ENCODE measurements at regions of chr16 and their contacts with region 1.

Region 1: DNA sequence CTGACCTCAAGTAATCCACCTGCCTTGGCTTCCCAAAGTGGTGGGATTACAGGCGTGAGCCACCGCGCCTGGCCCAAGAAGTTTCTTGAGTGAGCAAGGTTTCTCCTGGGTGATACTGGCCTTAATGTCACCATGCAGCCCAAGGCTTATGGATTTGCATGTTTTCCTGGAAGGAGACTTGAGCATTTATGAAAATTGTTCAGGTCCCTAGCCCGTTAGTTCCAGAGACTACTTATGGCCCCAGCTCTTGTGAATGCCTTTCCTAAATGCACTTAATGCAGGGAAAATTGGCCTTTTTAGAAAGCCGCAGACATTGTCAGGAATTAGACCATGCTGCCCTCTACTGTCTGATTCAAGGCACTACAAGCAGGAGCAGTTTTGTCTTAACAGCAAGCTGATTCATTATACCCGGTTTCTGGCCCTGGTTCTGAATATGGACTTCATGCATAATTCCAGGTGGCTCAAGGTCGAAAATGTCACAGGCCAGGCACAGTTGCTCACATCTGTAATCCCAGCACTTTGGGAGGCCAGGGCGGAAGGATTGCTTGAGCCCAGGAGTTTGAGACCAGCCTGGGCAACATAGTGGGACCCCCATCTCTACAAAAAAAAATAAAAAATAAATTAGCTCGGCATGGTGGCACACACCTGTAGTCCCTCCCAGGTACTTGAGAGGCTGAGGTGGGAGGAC is 91.3 kb downstream of the SNX29 start:
- DNase-seq: peak; percentile 41
- ATAC-seq: peak; percentile 66
- H3K4me3 Mint-ChIP-seq: no peak overlapping the region
- H3K27ac Mint-ChIP-seq: no peak overlapping the region
- H3K4me1 Mint-ChIP-seq: no peaks in the 10 kb centered on the region
- H3K27me3 Mint-ChIP-seq: no peaks in the 10 kb centered on the region
- CTCF ChIP-seq: peak; percentile 91

Region 2: DNA sequence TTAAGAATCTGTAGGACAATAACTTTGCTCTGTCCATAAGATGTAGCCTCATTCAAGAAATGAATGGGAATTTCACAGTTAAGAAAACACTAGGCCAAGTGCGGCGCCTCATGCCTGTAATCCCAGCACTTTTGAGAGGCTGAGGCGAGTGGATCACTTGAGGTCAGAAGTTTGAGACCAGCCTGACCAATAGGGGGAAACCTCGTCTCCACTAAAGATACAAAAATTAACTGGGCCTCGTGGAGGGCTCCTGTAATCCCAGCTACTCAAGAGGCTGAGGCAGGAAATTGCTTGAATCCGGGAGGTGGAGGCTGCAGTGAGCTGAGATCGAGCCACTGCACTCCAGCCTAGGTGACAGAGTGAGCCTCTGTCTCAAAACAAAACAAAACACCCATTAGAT is 196.7 kb before region 1 on chr16:
- CTCF ChIA-PET with region 1: interaction called, 16 read pairs
- POLR2A ChIA-PET with region 1: no interaction called
- DNase-seq: peak; percentile 28
- ATAC-seq: peak; percentile 89
- H3K4me3 Mint-ChIP-seq: no peak overlapping the region
- H3K27ac Mint-ChIP-seq: peak overlapping the region; percentile 87
- H3K4me1 Mint-ChIP-seq: peaks cover 4% of the 10 kb centered on the region
- H3K27me3 Mint-ChIP-seq: no peaks in the 10 kb centered on the region; the same call in 1 of the 2 replicates
- CTCF ChIP-seq: no peak

Region 3: DNA sequence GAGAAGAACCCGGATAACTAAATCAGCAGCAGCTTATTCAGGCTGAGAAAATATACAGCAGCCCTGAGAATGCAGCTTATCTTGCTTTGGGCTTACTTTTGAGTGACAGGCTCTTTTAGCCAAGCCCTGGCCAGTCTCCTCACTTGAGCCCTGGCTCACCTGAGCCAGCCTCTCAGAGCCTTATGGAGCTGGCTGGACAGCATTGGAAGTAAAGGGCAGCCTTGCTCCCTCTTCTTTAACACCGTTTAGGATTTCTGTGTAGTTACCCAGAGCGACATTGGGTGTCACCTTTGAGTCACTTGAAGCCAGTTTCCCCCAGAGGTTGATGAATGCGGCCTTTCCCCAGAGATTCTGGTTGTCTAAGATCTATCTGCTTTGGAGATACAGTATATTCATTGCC is 118.3 kb before region 1 on chr16:
- CTCF ChIA-PET with region 1: interaction called, 52 read pairs
- POLR2A ChIA-PET with region 1: no interaction called
- DNase-seq: peak; percentile 36
- ATAC-seq: peak; percentile 99
- H3K4me3 Mint-ChIP-seq: no peak overlapping the region
- H3K27ac Mint-ChIP-seq: no peak overlapping the region
- H3K4me1 Mint-ChIP-seq: peaks cover 4% of the 10 kb centered on the region
- H3K27me3 Mint-ChIP-seq: no peaks in the 10 kb centered on the region
- CTCF ChIP-seq: no peak

Region 4: DNA sequence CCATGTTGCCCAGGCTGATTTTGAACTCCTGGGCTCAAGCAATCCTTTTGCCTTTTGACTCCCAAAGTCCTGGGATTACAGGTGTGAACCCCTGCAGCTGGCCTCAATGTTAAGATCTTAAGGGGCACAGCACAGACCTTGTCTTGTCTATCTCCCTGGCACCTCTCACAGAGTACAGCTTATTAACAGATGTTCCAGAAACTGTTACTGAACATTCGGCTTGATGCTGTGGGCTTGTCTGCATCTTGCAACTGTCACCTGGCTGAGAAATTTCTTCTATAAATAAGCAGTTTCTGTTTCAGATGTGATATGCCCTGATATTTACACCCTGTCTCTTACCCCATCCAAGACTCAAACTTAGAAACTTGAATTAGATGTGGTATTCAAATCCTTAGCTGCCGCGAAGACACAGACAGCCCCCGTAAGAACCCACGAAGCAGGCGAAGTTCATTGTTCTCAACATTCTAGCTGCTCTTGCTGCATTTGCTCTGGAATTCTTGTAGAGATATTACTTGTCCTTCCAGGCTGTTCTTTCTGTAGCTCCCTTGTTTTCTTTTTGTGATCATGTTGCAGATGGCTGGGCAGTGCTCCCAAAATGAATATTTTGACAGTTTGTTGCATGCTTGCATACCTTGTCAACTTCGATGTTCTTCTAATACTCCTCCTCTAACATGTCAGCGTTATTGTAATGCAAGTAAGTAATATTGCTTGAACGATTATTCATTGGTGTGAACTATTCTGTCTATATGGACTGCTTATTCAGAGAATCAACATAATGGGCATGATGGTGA is 102.9 kb before region 1 on chr16 and contains the start of gene TNFRSF17:
- CTCF ChIA-PET with region 1: interaction called, 15 read pairs
- POLR2A ChIA-PET with region 1: interaction called, 3 read pairs
- DNase-seq: no peak
- ATAC-seq: no peak
- H3K4me3 Mint-ChIP-seq: no peak within 1 kb of the TSS
- H3K27ac Mint-ChIP-seq: no peak within 1 kb of the TSS
- H3K4me1 Mint-ChIP-seq: no peaks in the 10 kb centered on the region
- H3K27me3 Mint-ChIP-seq: no peaks in the 10 kb centered on the region
- CTCF ChIP-seq: no peak
- total RNA-seq, gene TNFRSF17: 0.18 TPM in 1 of 3 replicates, not detected in the others

Region 5: DNA sequence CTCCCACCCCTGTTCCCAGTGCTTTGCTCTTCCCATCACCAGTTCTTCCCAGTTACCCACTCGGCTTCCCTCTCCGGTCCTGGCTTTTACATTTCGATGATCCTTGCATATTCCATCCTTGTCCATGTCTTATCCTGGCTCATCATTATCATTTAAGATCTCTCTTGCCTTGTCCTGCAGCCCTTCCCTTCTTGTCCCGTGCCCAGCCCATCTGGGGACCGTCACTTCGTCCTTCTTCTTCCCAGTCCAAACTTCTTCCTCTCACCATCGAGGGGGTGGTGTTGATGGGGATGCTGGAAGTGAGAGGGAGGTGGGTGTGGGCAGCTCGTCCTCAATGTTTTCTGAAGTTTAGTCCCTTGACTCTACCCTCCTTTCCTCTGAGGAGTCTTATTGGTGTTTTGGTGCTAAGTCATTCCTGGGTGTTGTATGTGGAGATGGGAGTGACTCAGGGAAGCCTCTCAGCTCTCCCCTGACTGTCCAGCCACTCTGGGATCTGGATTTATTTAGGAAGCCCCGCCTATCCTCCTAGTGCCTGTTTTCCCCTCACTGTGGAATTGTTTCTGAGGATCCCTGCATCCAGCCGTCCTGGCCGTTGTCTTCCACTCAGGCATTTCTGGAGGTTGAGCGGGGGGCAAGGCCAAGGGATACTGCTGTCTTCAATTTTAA is 90.3 kb before region 1 on chr16:
- CTCF ChIA-PET with region 1: interaction called, 21 read pairs
- POLR2A ChIA-PET with region 1: no interaction called
- DNase-seq: no peak
- ATAC-seq: no peak
- H3K4me3 Mint-ChIP-seq: peak overlapping the region; percentile 100
- H3K27ac Mint-ChIP-seq: peak overlapping the region; percentile 10; the same call in 1 of the 2 replicates
- H3K4me1 Mint-ChIP-seq: peaks cover 22% of the 10 kb centered on the region
- H3K27me3 Mint-ChIP-seq: no peaks in the 10 kb centered on the region
- CTCF ChIP-seq: no peak

Region 6: GRCh38 chr16:12057266-12057665 is 10.6 kb before region 1 on chr16:
- CTCF ChIA-PET with region 1: interaction called, 27 read pairs
- POLR2A ChIA-PET with region 1: no interaction called
- DNase-seq: no peak
- ATAC-seq: no peak
- H3K4me3 Mint-ChIP-seq: no peak overlapping the region
- H3K27ac Mint-ChIP-seq: peak overlapping the region; percentile 57; the same call in 1 of the 2 replicates
- H3K4me1 Mint-ChIP-seq: no peaks in the 10 kb centered on the region
- H3K27me3 Mint-ChIP-seq: no peaks in the 10 kb centered on the region
- CTCF ChIP-seq: no peak

Region 7: GRCh38 chr16:12095275-12096156 is 27.7 kb after region 1 on chr16:
- CTCF ChIA-PET with region 1: interaction called, 15 read pairs
- POLR2A ChIA-PET with region 1: interaction called, 4 read pairs
- DNase-seq: peak; percentile 67
- ATAC-seq: no peak
- H3K4me3 Mint-ChIP-seq: no peak overlapping the region
- H3K27ac Mint-ChIP-seq: no peak overlapping the region
- H3K4me1 Mint-ChIP-seq: peaks cover 62% of the 10 kb centered on the region
- H3K27me3 Mint-ChIP-seq: peaks cover 8% of the 10 kb centered on the region
- CTCF ChIP-seq: peak; percentile 91

Region 8: GRCh38 chr16:12120217-12120981 is 52.5 kb after region 1 on chr16:
- CTCF ChIA-PET with region 1: no interaction called
- POLR2A ChIA-PET with region 1: no interaction called
- DNase-seq: no peak
- ATAC-seq: no peak
- H3K4me3 Mint-ChIP-seq: no peak overlapping the region
- H3K27ac Mint-ChIP-seq: peak overlapping the region; percentile 70; the same call in 1 of the 2 replicates
- H3K4me1 Mint-ChIP-seq: no peaks in the 10 kb centered on the region
- H3K27me3 Mint-ChIP-seq: no peaks in the 10 kb centered on the region
- CTCF ChIP-seq: no peak

Measured in WTC11 (cell line).